Esophagus muscularis mucosa (tissue), 4 donors: ENCODE measurements at regions of chr12 and their contacts with region 1.

Region 1: GRCh38 chr12:107322063-107322462 is 228.7 kb upstream of the CRY1 start:
- DNase-seq: no peak
- H3K4me3 ChIP-seq: no peak overlapping the region
- H3K27ac ChIP-seq: no peak overlapping the region
- H3K4me1 ChIP-seq: peaks cover 12 to 42% (median 38%) of the 10 kb centered on the region in 4 donors
- H3K27me3 ChIP-seq: peaks cover 8 to 93% (median 37%) of the 10 kb centered on the region in 4 donors
- CTCF ChIP-seq: no peak
- EP300 ChIP-seq: no peak
- POLR2A ChIP-seq: no peak

Region 2: DNA sequence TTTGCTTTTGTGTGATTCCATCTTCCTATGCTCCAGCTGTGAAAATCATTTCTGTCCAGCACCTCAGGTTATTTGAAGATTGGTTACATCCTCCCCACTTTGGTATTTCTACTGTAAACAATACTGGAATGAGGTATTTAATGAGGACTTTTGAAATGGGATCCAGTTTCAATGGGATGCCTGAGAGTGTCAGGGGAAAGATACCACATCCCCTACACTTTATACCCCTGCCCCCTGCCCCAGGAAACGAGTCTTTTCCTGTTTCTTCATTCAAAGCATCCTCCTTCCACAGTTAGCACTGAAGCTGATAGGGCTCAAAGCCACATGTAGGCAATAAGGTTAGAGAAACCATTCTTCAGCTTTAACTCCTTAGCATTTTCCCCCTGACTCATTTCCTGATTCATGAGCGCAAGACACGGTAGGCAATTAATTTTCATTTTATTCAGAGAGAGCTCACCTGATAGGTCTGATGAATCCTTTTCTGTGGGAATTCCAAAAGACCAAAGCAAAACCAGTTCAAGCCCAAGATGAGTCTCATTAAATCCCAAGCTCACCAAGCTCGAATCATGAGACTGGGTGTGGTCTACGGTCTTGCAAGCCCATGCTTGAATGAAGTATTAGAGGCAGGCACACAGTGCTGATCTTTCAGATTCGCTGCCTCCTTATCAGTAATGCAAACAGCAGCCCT is 85.1 kb before region 1 on chr12:
- intact Hi-C with region 1: no loop called
- DNase-seq: no peak
- H3K4me3 ChIP-seq: no peak overlapping the region
- H3K27ac ChIP-seq: no peak overlapping the region
- H3K4me1 ChIP-seq: no peaks in the 10 kb centered on the region
- H3K27me3 ChIP-seq: peaks cover 0 to 44% (median 0%) of the 10 kb centered on the region in 4 donors
- CTCF ChIP-seq: no peak
- EP300 ChIP-seq: no peak
- POLR2A ChIP-seq: no peak

Region 3: DNA sequence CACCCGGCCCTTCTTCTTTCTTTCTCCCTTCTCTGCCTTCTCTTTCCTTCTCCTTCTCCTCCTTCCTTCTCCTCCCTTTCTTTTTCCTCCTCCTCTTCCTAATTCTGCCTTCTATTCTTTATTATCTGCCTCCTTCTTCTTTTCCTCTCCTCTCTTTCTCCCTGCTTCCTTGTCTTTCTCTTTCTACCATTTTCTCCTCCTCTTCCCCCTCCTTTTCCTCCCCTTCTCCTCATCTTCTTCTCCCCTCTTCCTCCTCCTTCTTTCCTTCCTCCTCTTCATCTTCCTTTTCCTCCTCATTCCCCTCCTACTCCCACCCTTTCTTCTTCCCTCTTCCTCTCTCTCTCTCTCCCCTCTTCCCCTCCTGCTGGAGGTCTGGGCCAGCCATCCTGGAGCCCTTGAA is 66.2 kb after region 1 on chr12:
- intact Hi-C with region 1: loop called (anchors 2 kb)
- DNase-seq: no peak
- H3K4me3 ChIP-seq: no peak overlapping the region
- H3K27ac ChIP-seq: no peak overlapping the region
- H3K4me1 ChIP-seq: no peaks in the 10 kb centered on the region
- H3K27me3 ChIP-seq: no peaks in the 10 kb centered on the region
- CTCF ChIP-seq: no peak
- EP300 ChIP-seq: no peak
- POLR2A ChIP-seq: no peak